Activated CD4-positive, alpha-beta memory T cell treated with anti-CD3 and anti-CD28 coated beads, Interleukin-2, amount 10 ng/mL, durations not matched to agents 7 days and 5 days (primary cell): ENCODE measurements at regions of chr5 and their contacts with region 1.

Region 1: GRCh38 chr5:57173185-57174127 is at the start of gene GPBP1:
- DNase-seq: peak; percentile 98
- H3K4me3 Mint-ChIP-seq: peak within 1 kb of the TSS; percentile 96
- H3K27ac Mint-ChIP-seq: peak within 1 kb of the TSS; percentile 99
- H3K4me1 Mint-ChIP-seq: peaks cover 26% of the 10 kb centered on the region
- H3K27me3 Mint-ChIP-seq: no peaks in the 10 kb centered on the region
- total RNA-seq, gene GPBP1: 105 to 109 TPM

Region 2: GRCh38 chr5:56909294-56910209 is 263.9 kb before region 1 on chr5 and contains the start of gene SETD9:
- CTCF ChIA-PET with region 1: no interaction called
- POLR2A ChIA-PET with region 1: interaction called, 21 read pairs
- DNase-seq: peak; percentile 95
- H3K4me3 Mint-ChIP-seq: peak within 1 kb of the TSS; percentile 80
- H3K27ac Mint-ChIP-seq: peak within 1 kb of the TSS; percentile 75
- H3K4me1 Mint-ChIP-seq: peaks cover 22% of the 10 kb centered on the region
- H3K27me3 Mint-ChIP-seq: peaks cover 14% of the 10 kb centered on the region
- total RNA-seq, gene SETD9: 4.1 to 4.9 TPM

Region 3: DNA sequence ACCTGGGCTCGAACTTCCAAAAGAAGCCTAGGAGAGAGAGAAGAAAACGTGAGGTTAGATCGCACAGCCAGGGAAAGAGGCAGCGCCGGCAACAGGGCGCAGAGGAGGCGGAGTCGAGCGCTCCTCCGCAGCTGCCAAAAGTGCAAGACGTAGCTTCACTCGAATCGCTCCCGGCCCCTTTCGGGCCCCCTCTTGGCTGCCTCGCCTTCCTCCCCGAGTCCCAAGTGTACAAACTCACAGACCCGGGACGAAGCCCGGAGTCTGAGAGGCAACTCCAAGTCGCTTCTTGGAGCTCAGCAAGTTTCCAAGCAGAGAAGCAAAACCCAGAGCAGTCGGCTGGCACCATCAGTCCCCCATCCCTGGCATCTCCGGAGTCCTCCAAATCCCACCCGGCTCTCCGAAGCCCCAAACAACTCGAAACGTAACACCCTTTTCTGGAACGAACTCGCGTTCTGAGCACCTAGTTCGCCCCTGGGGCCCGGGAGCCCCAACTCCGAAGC is 222.8 kb before region 1 on chr5:
- CTCF ChIA-PET with region 1: interaction called, 3 read pairs
- POLR2A ChIA-PET with region 1: interaction called, 11 read pairs
- DNase-seq: peak; percentile 60
- H3K4me3 Mint-ChIP-seq: peak overlapping the region; percentile 91
- H3K27ac Mint-ChIP-seq: peak overlapping the region; percentile 77
- H3K4me1 Mint-ChIP-seq: peaks cover 22% of the 10 kb centered on the region
- H3K27me3 Mint-ChIP-seq: peaks cover 26% of the 10 kb centered on the region

Region 4: DNA sequence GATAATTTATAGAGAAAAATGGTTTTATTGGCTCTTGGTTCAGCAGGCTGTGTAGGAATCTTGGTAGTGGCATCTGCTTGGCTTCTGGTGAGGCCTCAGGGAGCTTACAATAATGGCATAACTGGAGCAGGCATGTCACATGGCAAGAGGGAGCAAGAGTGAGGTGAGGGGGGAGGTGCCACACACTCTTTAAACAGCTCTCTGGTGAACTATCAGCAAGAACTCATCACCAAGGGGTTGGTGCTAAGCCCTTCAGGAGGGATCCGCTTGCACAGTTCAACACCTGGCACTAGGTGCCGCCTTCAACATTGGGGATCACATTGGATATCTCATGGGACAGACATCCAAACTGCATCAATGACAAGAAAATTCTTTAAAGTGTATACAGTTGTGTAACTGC is 10.9 kb after region 1 on chr5:
- CTCF ChIA-PET with region 1: interaction called, 4 read pairs
- POLR2A ChIA-PET with region 1: interaction called, 12 read pairs
- DNase-seq: no peak
- H3K4me3 Mint-ChIP-seq: no peak overlapping the region
- H3K27ac Mint-ChIP-seq: no peak overlapping the region
- H3K4me1 Mint-ChIP-seq: peaks cover 76% of the 10 kb centered on the region
- H3K27me3 Mint-ChIP-seq: no peaks in the 10 kb centered on the region

Region 5: GRCh38 chr5:57191986-57192385 is 18.5 kb after region 1 on chr5:
- CTCF ChIA-PET with region 1: interaction called, 4 read pairs
- POLR2A ChIA-PET with region 1: interaction called, 12 read pairs
- DNase-seq: no peak
- H3K4me3 Mint-ChIP-seq: no peak overlapping the region
- H3K27ac Mint-ChIP-seq: no peak overlapping the region
- H3K4me1 Mint-ChIP-seq: peaks cover 68% of the 10 kb centered on the region
- H3K27me3 Mint-ChIP-seq: no peaks in the 10 kb centered on the region